ENCODE measurements at regions of chr18 and their contacts with region 1.

Region 1: DNA sequence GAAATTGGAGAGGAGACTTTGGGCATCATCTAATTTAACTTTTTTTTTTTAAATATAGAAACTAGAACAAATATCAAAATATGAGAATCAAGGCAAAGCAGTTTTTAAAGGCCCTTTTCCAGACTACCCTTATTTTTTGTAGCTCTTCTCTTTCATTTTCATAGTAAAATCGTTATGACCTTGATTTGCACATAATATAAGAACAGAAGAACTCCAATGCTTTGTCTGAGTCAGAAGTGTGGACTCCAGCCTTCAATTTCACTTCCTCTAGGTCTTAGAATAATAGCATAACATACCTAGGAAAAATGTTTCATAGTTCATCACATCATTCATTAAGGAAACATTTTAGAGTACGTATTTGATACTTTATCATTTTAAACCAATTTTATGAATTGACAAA is 74.4 kb downstream of the ANKRD12 start:
- DNase-seq: no peak
- ATAC-seq: no peak
- H3K4me3 ChIP-seq: no peak overlapping the region
- H3K4me3 Mint-ChIP-seq: no peak overlapping the region
- H3K27ac ChIP-seq: no peak overlapping the region
- H3K27ac Mint-ChIP-seq: peak overlapping the region in 1 of 9 donors; percentile 72
- H3K4me1 ChIP-seq: peaks cover 0 to 6% of the 10 kb centered on the region in 2 donors
- H3K4me1 Mint-ChIP-seq: peaks cover 0 to 42% (median 14%) of the 10 kb centered on the region in 7 donors
- H3K27me3 ChIP-seq: no peaks in the 10 kb centered on the region
- H3K27me3 Mint-ChIP-seq: no peaks in the 10 kb centered on the region

Region 2: DNA sequence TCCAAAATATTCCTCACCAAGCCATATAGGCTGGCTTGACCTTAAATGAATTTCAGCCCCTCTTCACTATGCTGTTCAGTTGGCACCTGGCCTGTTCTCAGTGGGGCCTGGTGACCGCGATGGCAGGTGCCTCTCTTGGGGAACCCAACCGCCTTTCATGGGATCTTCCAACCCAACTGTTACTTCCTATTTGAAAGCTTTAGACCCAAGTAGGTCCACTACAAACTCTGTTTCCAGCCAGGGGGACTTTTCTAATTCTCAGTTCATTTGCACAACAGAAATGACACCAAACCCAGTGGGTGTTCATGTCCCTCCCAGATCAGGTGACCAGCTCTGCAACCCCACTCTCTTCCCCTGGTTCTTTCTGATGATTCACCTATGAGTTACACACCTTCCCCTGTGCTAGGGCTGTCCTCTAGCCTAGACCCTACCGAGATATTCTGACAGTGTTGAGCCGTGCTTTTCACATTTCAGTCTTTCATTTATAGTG is 144.1 kb before region 1 on chr18:
- CTCF ChIA-PET with region 1: no interaction called
- POLR2A ChIA-PET with region 1: no interaction called
- intact Hi-C with region 1: loop called in 1 of 2 experiments (anchors 2 kb)
- DNase-seq: no peak
- ATAC-seq: no peak
- H3K4me3 ChIP-seq: no peak overlapping the region
- H3K4me3 Mint-ChIP-seq: peak overlapping the region in 1 of 10 donors; percentile 10
- H3K27ac ChIP-seq: no peak overlapping the region
- H3K27ac Mint-ChIP-seq: peak overlapping the region in 2 of 9 donors; percentile 0 to 69
- H3K4me1 ChIP-seq: no peaks in the 10 kb centered on the region
- H3K4me1 Mint-ChIP-seq: peaks cover 0 to 27% (median 0%) of the 10 kb centered on the region in 7 donors
- H3K27me3 ChIP-seq: no peaks in the 10 kb centered on the region
- H3K27me3 Mint-ChIP-seq: peaks cover 0 to 12% (median 5%) of the 10 kb centered on the region in 5 donors

Region 3: GRCh38 chr18:9188359-9189231 is 22.4 kb before region 1 on chr18:
- CTCF ChIA-PET with region 1: interaction called, 4 read pairs
- POLR2A ChIA-PET with region 1: no interaction called
- intact Hi-C with region 1: loop called in 1 of 2 experiments (anchors 2 kb)
- DNase-seq: no peak
- ATAC-seq: no peak
- H3K4me3 ChIP-seq: no peak overlapping the region
- H3K4me3 Mint-ChIP-seq: peak overlapping the region in 1 of 10 donors; percentile 31
- H3K27ac ChIP-seq: no peak overlapping the region
- H3K27ac Mint-ChIP-seq: peak overlapping the region in 3 of 9 donors; percentile 23 to 53 (median 29)
- H3K4me1 ChIP-seq: peaks cover 7 to 12% of the 10 kb centered on the region in 2 donors
- H3K4me1 Mint-ChIP-seq: peaks cover 27 to 63% (median 52%) of the 10 kb centered on the region in 7 donors
- H3K27me3 ChIP-seq: no peaks in the 10 kb centered on the region
- H3K27me3 Mint-ChIP-seq: no peaks in the 10 kb centered on the region